OCI-LY7 (cell line): ENCODE measurements at regions of chr4 and their contacts with region 1.

Region 1: GRCh38 chr4:70613306-70614183 is 15.0 kb upstream of the ENAM start:
- DNase-seq: peak; percentile 47
- H3K4me3 ChIP-seq: peak overlapping the region; percentile 34
- H3K27ac ChIP-seq: no peak overlapping the region
- H3K4me1 ChIP-seq: peaks cover 20% of the 10 kb centered on the region
- CTCF ChIP-seq: no peak

Region 2: DNA sequence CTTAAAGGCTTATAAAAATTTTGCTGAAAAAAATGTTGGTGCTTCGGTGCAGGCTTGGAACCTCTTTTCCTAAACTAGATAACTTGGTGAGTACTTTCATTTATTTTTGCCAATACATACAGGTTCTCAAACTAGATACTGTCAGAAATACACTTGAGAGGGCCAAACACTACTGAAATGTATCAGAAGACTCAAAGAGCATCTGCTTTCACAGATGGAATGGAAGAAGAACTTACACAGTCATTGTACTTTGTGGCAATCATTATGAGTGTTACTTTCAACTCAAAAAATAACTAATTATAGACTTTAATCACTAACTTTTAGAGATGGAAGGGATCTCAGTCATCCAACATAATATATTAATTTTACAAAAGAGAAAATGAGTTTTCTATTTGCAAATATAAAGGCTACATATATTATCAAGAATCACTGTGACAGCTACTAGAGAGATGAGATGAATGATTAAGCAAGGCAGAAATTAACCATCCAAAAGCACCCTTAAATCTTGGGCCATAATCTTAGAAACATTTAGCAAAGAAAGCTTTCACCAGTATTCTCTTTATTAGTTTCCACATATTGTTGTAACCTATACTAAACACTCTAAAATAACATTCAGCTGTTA is 16.0 kb after region 1 on chr4:
- CTCF ChIA-PET with region 1: no interaction called
- POLR2A ChIA-PET with region 1: interaction called, 16 read pairs
- intact Hi-C with region 1: no loop called
- DNase-seq: no peak
- H3K4me3 ChIP-seq: no peak overlapping the region
- H3K27ac ChIP-seq: no peak overlapping the region
- H3K4me1 ChIP-seq: peaks cover 18% of the 10 kb centered on the region
- CTCF ChIP-seq: no peak